Activated B cell treated with CpG ODN at 0.5 μM for 24 hours (primary cell): ENCODE measurements at regions of chr2 and their contacts with region 1.

Region 1: DNA sequence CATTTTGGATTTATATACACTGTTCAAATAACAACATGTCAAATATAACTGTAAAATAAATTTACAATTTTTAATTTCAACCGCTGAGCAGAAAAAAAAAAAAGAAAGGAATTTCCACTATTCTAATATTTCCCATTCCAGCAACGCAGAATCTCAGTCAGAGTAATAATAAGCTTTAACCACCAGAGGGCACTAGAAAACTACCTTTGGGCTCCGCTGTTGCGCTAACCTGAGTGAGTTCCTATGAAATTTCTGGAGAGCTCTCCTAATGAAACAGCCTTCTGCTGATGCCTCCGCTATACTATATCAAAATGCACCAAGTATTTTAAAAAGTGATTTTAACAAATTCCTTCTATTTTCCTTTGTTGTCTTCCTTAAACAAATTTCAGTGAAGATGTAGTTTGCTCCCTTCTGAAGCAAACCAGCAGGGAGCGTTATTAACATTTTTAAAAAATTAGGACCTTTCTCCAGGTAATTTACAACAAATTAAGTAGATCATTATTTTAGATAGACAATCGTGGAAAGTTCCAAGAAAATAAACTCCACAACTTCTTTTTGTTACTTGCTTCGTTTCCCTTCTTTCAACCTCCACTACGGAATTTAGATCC is 23.0 kb downstream of the ERMN start:
- DNase-seq: no peak
- ATAC-seq: peak; percentile 69
- H3K4me3 Mint-ChIP-seq: no peak overlapping the region
- H3K27ac Mint-ChIP-seq: no peak overlapping the region
- H3K4me1 Mint-ChIP-seq: peaks cover 6% of the 10 kb centered on the region
- H3K27me3 Mint-ChIP-seq: peaks cover 13% of the 10 kb centered on the region
- CTCF ChIP-seq: peak; percentile 53

Region 2: GRCh38 chr2:157497638-157498314 is 195.2 kb after region 1 on chr2:
- CTCF ChIA-PET with region 1: interaction called, 44 read pairs
- POLR2A ChIA-PET with region 1: no interaction called
- intact Hi-C with region 1: loop called (anchors 1 kb)
- DNase-seq: no peak
- ATAC-seq: peak; percentile 78
- H3K4me3 Mint-ChIP-seq: no peak overlapping the region
- H3K27ac Mint-ChIP-seq: no peak overlapping the region
- H3K4me1 Mint-ChIP-seq: peaks cover 38% of the 10 kb centered on the region
- H3K27me3 Mint-ChIP-seq: no peaks in the 10 kb centered on the region
- CTCF ChIP-seq: peak; percentile 46

Region 3: GRCh38 chr2:157603198-157603597 is 300.6 kb after region 1 on chr2:
- CTCF ChIA-PET with region 1: interaction called, 99 read pairs
- POLR2A ChIA-PET with region 1: no interaction called
- intact Hi-C with region 1: no loop called
- DNase-seq: no peak
- ATAC-seq: no peak
- H3K4me3 Mint-ChIP-seq: no peak overlapping the region
- H3K27ac Mint-ChIP-seq: no peak overlapping the region
- H3K4me1 Mint-ChIP-seq: no peaks in the 10 kb centered on the region
- H3K27me3 Mint-ChIP-seq: peaks cover under 1% of the 10 kb centered on the region
- CTCF ChIP-seq: no peak

Region 4: GRCh38 chr2:158006961-158007719 is 704.5 kb after region 1 on chr2:
- CTCF ChIA-PET with region 1: interaction called, 29 read pairs
- POLR2A ChIA-PET with region 1: no interaction called
- intact Hi-C with region 1: loop called (anchors 1 kb)
- DNase-seq: no peak
- ATAC-seq: no peak
- H3K4me3 Mint-ChIP-seq: no peak overlapping the region
- H3K27ac Mint-ChIP-seq: no peak overlapping the region
- H3K4me1 Mint-ChIP-seq: peaks cover 5% of the 10 kb centered on the region
- H3K27me3 Mint-ChIP-seq: peaks cover 5% of the 10 kb centered on the region
- CTCF ChIP-seq: no peak

Region 5: GRCh38 chr2:158753641-158754611 is 1451.3 kb after region 1 on chr2:
- CTCF ChIA-PET with region 1: interaction called, 17 read pairs
- POLR2A ChIA-PET with region 1: no interaction called
- intact Hi-C with region 1: loop called (anchors 1 kb)
- DNase-seq: no peak
- ATAC-seq: peak; percentile 74
- H3K4me3 Mint-ChIP-seq: no peak overlapping the region
- H3K27ac Mint-ChIP-seq: no peak overlapping the region
- H3K4me1 Mint-ChIP-seq: no peaks in the 10 kb centered on the region
- H3K27me3 Mint-ChIP-seq: peaks cover 10% of the 10 kb centered on the region
- CTCF ChIP-seq: no peak